Gastrocnemius medialis (tissue), 4 donors: ENCODE measurements at regions of chr5 and their contacts with region 1.

Region 1: GRCh38 chr5:38613988-38614833 is 57.8 kb upstream of the LIFR start:
- DNase-seq: no peak
- ATAC-seq: no peak
- H3K4me3 ChIP-seq: no peak overlapping the region
- H3K27ac ChIP-seq: no peak overlapping the region
- H3K4me1 ChIP-seq: peaks cover 0 to 16% of the 10 kb centered on the region in 2 donors
- H3K27me3 ChIP-seq: no peaks in the 10 kb centered on the region
- CTCF ChIP-seq: no peak
- POLR2A ChIP-seq: no peak

Region 2: DNA sequence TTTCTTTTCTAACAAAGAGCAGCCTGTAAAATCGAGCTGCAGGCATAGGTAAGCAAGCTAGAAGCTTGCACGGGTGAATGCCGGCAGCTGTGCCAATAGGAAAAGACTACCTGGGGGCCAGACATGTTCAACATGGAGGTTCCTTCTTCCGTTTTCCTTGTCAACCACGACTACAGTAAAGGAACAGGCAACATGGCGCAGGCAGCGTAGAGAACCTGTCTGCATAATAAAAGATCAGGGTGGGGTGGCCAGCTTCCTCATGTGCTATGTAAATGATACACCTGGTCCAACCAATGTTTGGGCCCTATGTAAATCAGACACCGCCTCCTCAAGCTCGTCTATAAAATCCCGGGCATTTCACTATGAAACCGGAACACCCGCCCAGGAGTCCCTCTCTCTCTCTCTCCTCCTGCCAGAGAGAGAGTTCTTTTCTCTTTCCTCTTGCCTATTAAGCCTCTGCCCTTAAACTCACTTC is 46.0 kb after region 1 on chr5:
- in situ Hi-C with region 1: loop called in 1 of 4 experiments (anchors 5 kb)
- intact Hi-C with region 1: loop called (anchors 5 kb)
- DNase-seq: peak; percentile 58 to 81
- ATAC-seq: peak; percentile 90 to 96
- H3K4me3 ChIP-seq: peak overlapping the region; percentile 18 to 36 (median 34)
- H3K27ac ChIP-seq: peak overlapping the region; percentile 45 to 82 (median 72)
- H3K4me1 ChIP-seq: peaks cover 33 to 34% of the 10 kb centered on the region in 2 donors
- H3K27me3 ChIP-seq: no peaks in the 10 kb centered on the region
- CTCF ChIP-seq: no peak
- POLR2A ChIP-seq: peak; percentile 47 to 64